ENCODE measurements at regions of chr5 and their contacts with region 1.

Region 1: DNA sequence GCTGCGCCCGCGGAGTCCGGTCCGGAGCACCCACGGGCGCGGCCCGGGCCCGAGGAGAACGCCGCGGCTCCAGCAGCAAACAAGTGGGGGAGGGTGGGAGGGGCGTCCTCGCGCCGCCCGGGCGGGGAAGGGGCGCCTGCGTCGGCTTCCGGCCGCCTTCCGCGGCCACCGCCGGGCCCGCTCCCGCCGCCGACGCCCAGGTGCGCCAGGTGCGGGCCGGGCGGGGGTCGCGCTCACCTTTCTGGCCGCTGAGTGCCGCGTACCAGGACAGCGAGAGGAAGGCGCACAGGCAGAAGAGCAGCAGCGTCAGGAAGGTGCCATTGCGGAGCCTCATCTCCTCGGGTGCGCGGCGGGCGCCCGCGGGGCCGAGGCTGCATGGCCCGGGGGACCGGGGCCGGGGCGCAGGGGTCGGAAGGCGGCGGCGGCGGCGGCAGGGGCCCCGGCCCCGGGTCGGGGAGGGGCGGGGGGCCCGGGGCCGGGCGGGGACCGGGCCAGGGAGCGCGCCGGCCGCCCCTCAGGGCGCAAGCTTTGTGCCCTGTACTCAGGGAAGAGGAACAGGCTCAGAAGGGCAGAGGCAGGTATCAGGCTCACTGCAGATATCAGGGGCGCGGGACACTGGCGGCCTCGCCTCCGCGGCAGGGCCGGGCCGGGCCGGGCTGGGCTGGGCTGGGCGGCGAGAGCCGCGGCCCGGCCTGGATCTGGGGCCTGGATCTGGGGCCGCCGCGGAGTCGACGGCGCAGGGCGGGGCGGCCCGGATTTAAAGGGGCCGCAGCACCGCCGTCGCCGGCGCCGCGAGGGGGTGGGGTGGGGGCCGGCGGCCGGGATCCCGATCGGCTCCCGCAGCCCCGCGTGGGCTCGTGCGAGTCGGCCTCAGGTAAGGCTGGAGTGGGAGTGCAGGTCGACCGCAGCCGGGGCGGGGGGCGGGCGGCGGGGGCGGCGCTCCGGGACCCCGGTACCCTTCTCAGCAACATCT is at the start of gene MGAT4B:
- H3K4me3 Mint-ChIP-seq: peak within 1 kb of the TSS; percentile 86
- H3K27ac Mint-ChIP-seq: peak within 1 kb of the TSS; percentile 77
- H3K4me1 Mint-ChIP-seq: peaks cover 56% of the 10 kb centered on the region
- H3K27me3 Mint-ChIP-seq: no peaks in the 10 kb centered on the region

Region 2: GRCh38 chr5:179821581-179822432 is 15.3 kb after region 1 on chr5:
- intact Hi-C with region 1: loop called (anchors 2 kb)
- H3K4me3 Mint-ChIP-seq: peak overlapping the region; percentile 94
- H3K27ac Mint-ChIP-seq: peak overlapping the region; percentile 97
- H3K4me1 Mint-ChIP-seq: peaks cover 84% of the 10 kb centered on the region
- H3K27me3 Mint-ChIP-seq: peaks cover 5% of the 10 kb centered on the region

Region 3: DNA sequence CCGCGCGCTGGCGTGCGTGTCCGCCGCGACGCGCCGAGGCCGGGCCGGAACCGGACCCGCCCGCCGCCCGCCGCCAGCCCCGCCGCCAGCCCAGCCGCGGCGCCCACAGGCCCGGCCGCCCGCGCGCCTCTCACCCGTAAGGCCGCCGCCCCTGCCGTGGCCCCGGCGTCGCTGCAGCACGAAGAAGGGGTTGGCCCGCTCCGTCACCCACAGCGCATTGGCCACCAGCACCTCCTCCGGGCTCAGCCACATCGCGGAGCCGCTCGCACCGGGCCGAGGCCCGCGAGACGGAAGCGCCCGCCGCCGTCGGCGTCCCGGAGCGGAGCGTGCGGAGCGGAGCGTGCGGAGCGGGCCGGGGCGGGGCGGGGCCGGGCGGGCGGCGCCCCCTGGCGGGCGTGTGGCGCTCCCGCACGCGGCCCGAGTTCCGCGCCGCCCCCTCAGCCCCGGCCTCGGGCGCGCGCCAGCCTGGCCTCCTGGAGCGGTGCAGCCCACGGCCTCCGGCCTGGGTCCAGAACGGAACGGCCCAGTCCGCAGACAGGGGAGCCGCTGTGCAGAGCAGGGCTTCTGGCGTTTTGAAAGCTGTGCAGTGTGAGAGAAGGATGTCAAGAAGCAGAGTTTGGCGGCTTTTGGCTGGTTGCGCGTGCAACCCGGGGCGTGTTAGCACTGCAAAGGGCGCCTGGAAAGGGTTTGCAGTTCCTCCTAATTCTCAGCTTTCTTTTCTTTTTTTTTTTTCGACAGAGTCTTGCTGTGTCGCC is 101.2 kb after region 1 on chr5 and contains the start of gene TBC1D9B:
- intact Hi-C with region 1: loop called (anchors 5 kb)
- H3K4me3 Mint-ChIP-seq: peak within 1 kb of the TSS; percentile 95
- H3K27ac Mint-ChIP-seq: peak within 1 kb of the TSS; percentile 92
- H3K4me1 Mint-ChIP-seq: peaks cover 49% of the 10 kb centered on the region
- H3K27me3 Mint-ChIP-seq: no peaks in the 10 kb centered on the region

Region 4: DNA sequence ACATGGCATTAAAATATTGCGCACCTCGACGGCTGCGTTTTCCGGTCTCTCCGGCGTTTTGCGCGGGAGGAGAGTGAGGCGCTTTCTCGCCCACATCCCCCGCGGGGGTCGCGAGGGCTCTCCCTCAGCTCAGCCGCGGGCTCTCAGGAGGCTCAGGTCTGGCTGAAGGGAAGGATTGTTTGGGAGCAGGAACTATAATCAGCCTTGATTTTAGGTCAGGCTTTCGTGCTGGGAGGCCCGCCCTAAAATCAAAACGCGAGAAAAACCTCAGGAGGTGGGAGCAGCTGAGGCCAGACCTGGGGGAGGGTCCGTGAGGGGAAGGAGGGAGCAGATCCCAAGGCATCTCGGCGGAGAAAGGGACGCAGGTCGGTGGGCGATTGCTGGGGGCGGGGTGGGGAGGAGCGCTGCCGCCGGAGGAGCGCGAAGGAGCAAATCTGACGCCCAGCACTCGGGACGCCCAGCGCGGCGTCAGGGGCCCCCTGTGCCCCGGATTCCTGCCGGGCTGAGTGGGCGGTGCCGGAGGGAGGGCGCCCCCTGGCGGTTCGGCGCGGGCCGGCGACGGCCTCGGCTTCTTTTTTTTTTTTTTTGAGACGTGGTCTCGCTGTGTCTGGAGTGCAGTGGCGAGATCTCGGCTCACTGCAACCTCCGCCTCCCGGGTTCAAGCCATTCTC is 283.7 kb after region 1 on chr5:
- intact Hi-C with region 1: loop called (anchors 5 kb)
- H3K4me3 Mint-ChIP-seq: peak overlapping the region; percentile 88
- H3K27ac Mint-ChIP-seq: peak overlapping the region; percentile 92
- H3K4me1 Mint-ChIP-seq: peaks cover 60% of the 10 kb centered on the region
- H3K27me3 Mint-ChIP-seq: peaks cover 3% of the 10 kb centered on the region

Measured in dendritic cell treated with granulocyte-macrophage colony-stimulating factor and Interleukin-4, amounts not matched to agents 40 ng/mL and 50 ng/mL, for 4 days (primary cell).